ENCODE measurements at regions of chr12 and their contacts with region 1.

Region 1: DNA sequence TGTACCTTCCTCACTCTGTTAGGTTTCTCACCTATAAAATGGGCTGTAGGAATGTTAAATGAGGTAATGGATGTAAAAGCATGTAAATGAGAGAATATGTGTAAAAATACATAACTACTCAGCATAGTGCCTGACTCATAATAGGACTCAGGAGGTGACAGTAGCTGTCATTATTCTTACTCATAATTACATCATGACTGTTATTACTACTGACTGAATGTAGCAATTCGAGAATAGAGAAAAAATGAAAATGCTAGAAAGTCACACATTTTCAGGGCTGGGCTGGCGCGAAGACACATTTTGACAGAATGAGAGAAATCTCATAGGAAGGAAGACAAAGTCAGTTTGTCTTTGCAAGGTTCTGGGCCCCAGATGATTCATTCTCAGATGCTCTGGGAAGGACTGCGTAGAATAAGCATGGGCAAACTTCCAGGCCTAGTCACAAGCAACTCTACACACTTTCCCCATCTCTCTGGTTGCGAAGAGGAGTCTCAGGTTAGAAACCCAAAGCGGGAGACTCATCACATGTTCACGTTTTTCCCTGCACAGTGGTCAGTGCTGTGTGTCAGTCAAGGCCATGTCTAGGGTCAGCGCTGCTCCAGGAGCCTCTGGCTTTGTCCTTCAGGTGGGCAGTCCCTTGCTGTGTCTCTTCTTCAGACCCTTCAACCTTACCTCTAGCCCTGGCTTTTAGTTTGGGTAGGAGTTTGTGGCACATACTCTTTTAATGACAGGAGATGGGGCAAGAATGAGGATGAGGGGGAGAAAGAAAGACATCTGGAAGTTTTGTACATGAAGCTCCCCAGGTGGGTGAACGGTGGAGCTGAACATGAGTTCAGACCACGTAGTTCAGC is 8.4 kb downstream of the GPRC5A start:
- DNase-seq: peak; percentile 87
- ATAC-seq: peak; percentile 87
- H3K4me3 Mint-ChIP-seq: no peak overlapping the region
- H3K27ac Mint-ChIP-seq: peak overlapping the region; percentile 88
- H3K4me1 Mint-ChIP-seq: peaks cover 39% of the 10 kb centered on the region
- H3K27me3 Mint-ChIP-seq: peaks cover 16% of the 10 kb centered on the region

Region 2: GRCh38 chr12:12724661-12725545 is 174.9 kb before region 1 on chr12:
- CTCF ChIA-PET with region 1: no interaction called
- POLR2A ChIA-PET with region 1: no interaction called
- intact Hi-C with region 1: loop called in 1 of 2 experiments (anchors 1 kb)
- DNase-seq: peak; percentile 94
- ATAC-seq: peak; percentile 59
- H3K4me3 Mint-ChIP-seq: peak overlapping the region; percentile 93
- H3K27ac Mint-ChIP-seq: peak overlapping the region; percentile 98
- H3K4me1 Mint-ChIP-seq: peaks cover 45% of the 10 kb centered on the region
- H3K27me3 Mint-ChIP-seq: no peaks in the 10 kb centered on the region

Region 3: DNA sequence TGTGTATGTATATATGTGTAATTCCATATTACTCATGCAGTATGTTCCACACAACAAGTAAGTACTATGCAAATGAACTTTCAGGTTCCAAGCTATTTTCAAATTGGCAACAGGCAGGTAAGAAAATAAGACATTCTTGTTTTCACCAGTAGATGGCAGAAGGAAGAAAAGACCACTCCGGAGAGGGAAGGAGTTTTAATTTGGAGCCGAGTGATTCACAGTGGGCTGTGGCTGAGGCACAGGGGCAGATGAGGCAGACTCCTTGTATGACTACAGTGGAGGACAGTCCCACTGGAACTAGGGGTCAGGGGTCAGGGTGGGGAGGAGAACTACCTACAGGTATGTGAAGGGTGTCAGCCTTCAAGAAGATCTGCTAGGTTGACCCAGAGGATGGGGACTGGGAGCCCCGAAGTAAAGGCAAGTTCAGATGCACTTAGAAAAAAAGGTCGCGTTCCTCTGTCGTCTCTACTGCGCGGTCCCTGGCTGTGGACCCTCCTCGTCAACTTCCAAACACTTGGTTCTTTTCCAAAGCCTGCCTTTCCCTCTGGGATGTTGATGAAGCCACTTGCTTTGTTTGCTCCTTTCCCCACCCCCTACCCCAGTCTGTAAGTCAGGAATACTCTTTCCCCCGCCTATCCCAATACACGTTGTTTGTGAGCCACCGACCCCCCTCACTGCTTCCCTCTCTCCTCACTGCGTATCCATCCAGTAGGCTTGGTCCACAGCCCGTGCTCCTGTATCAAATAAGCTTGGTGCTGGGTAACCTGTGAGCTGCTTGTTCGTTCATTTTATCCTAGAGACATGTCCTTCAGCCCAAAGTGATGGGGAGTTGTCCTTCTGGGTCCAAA is 62.5 kb before region 1 on chr12:
- CTCF ChIA-PET with region 1: interaction called, 4 read pairs
- POLR2A ChIA-PET with region 1: no interaction called
- intact Hi-C with region 1: loop called (anchors 1 to 2 kb)
- DNase-seq: peak; percentile 76
- ATAC-seq: peak; percentile 95
- H3K4me3 Mint-ChIP-seq: no peak overlapping the region
- H3K27ac Mint-ChIP-seq: peak overlapping the region; percentile 77
- H3K4me1 Mint-ChIP-seq: peaks cover 44% of the 10 kb centered on the region
- H3K27me3 Mint-ChIP-seq: no peaks in the 10 kb centered on the region

Region 4: GRCh38 chr12:13100882-13101769 is 201.4 kb after region 1 on chr12:
- CTCF ChIA-PET with region 1: interaction called, 4 read pairs
- POLR2A ChIA-PET with region 1: no interaction called
- intact Hi-C with region 1: loop called (anchors 1 to 5 kb)
- DNase-seq: peak; percentile 93
- ATAC-seq: peak; percentile 70
- H3K4me3 Mint-ChIP-seq: peak overlapping the region; percentile 63
- H3K27ac Mint-ChIP-seq: peak overlapping the region; percentile 72
- H3K4me1 Mint-ChIP-seq: peaks cover 58% of the 10 kb centered on the region
- H3K27me3 Mint-ChIP-seq: no peaks in the 10 kb centered on the region

Region 5: GRCh38 chr12:13196130-13196921 is 296.6 kb after region 1 on chr12 and contains the start of gene EMP1:
- CTCF ChIA-PET with region 1: interaction called, 4 read pairs
- POLR2A ChIA-PET with region 1: interaction called, 3 read pairs
- intact Hi-C with region 1: loop called (anchors 1 kb)
- DNase-seq: peak; percentile 89
- ATAC-seq: peak; percentile 97
- H3K4me3 Mint-ChIP-seq: peak within 1 kb of the TSS; percentile 82
- H3K27ac Mint-ChIP-seq: peak within 1 kb of the TSS; percentile 83
- H3K4me1 Mint-ChIP-seq: peaks cover 32% of the 10 kb centered on the region
- H3K27me3 Mint-ChIP-seq: no peaks in the 10 kb centered on the region
- total RNA-seq, gene EMP1: 12.9 to 16.6 TPM

Region 6: DNA sequence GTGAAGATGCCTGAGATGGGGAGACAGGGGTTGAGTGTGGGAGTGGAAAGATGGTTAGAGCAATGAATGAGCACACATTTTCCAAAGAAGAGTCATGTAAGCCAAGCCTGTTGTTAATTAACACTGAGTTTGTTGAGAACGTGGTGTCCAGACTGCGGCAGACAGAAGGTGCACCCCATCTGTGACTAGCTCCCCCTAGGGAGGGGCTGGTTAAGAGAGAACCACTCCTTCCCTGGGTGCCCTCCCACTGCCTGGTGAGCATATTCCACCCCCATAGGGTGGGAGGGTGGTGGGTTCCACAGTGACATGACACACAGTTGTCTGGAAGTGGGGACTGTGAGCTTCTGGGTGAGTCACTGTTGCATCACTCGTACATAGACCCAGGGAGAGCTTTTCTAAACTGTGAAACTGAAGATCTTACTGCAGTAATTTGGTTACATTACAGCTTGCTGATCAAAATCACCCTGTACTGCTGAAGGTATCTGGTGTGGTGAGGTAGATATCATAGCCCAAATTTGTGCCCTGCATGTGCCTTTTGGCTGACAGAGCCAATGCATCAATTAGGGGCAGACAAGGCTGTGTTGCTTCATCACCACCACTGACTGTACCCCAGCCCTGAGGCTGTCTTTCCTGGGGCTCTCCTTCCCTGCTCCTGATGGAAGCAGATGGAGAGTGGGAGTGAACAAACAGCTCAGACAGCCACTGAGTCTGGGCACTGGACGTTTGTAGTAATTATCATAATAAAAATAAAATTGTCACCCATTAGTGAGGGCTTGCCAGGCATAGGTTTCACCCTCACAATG is 447.7 kb after region 1 on chr12:
- CTCF ChIA-PET with region 1: no interaction called
- POLR2A ChIA-PET with region 1: no interaction called
- intact Hi-C with region 1: loop called in 1 of 2 experiments (anchors 1 kb)
- DNase-seq: peak; percentile 82
- ATAC-seq: peak; percentile 92
- H3K4me3 Mint-ChIP-seq: no peak overlapping the region
- H3K27ac Mint-ChIP-seq: peak overlapping the region; percentile 21
- H3K4me1 Mint-ChIP-seq: peaks cover 23% of the 10 kb centered on the region
- H3K27me3 Mint-ChIP-seq: peaks cover 45% of the 10 kb centered on the region

Measured in activated CD4-positive, alpha-beta T cell treated with anti-CD3 and anti-CD28 coated beads for 36 hours (primary cell).